Transverse colon (tissue), 4 donors: ENCODE measurements at regions of chr6 and their contacts with region 1.

Region 1: DNA sequence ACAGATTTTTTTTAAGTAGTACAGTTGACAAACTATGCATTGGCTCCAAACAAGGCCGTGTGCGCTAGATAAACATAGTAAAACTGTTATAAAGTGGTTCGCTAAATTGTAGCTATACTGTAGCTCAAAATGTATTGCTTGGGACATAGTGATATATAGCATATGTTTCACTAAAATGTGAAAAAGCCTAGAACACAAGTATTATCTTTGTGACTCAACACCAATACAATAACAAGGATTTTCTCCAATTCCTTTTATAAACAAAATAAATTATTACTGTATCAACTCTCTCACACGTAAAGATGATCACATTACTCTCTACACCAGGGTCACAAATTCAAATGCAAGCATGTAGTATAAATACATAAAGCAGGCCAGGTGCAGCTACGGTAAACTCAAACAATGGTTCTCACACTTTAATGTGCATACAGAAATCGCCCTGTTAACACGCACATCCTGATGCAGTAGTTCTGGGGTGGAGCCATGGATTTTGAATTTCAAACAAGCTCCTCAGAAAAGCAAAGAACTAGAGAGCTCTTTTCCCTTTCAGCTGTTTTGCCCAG is 214.6 kb downstream of the GMDS start:
- DNase-seq: no peak
- H3K4me3 ChIP-seq: no peak overlapping the region
- H3K27ac ChIP-seq: no peak overlapping the region
- H3K4me1 ChIP-seq: peaks cover 0 to 11% (median 2%) of the 10 kb centered on the region in 4 donors
- H3K27me3 ChIP-seq: no peaks in the 10 kb centered on the region
- CTCF ChIP-seq: no peak
- EP300 ChIP-seq: no peak
- POLR2A ChIP-seq: no peak

Region 2: DNA sequence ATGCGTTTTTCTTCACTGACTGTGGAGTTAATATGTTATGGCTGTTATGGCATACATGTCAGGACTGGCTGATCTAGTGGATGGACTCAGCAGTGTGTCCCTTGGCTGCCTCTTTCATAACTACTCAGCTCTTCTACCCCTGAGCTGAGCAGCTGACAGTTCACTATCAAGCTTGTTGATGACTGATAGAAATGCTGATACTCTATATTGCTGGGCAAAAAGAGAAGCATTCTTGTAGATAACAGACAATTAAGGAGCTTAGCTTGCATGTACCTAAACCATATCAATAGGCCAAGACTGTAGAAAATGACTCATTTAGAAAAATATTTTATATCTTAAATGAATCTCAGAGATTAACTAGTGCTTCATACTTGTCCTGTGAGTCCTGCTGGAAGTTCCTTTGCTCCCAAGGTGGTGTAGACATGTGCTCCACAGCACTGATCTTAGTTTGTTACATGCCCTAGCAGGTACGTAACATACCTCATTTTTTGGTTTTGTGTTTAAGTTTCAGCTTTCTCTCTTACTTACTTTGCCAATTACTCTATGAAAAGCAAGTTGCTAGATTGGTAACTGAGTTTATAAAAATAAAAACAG is 22.3 kb before region 1 on chr6:
- in situ Hi-C with region 1: no loop called
- intact Hi-C with region 1: loop called (anchors 1 kb)
- DNase-seq: no peak
- H3K4me3 ChIP-seq: no peak overlapping the region
- H3K27ac ChIP-seq: no peak overlapping the region
- H3K4me1 ChIP-seq: peaks cover 0 to 2% (median 0%) of the 10 kb centered on the region in 4 donors
- H3K27me3 ChIP-seq: no peaks in the 10 kb centered on the region
- CTCF ChIP-seq: no peak
- EP300 ChIP-seq: no peak
- POLR2A ChIP-seq: no peak